Activated naive CD8-positive, alpha-beta T cell treated with anti-CD3 and anti-CD28 coated beads, Interleukin-2, amount 10 ng/mL, durations not matched to agents 7 days and 5 days (primary cell): ENCODE measurements at regions of chr5 and their contacts with region 1.

Region 1: DNA sequence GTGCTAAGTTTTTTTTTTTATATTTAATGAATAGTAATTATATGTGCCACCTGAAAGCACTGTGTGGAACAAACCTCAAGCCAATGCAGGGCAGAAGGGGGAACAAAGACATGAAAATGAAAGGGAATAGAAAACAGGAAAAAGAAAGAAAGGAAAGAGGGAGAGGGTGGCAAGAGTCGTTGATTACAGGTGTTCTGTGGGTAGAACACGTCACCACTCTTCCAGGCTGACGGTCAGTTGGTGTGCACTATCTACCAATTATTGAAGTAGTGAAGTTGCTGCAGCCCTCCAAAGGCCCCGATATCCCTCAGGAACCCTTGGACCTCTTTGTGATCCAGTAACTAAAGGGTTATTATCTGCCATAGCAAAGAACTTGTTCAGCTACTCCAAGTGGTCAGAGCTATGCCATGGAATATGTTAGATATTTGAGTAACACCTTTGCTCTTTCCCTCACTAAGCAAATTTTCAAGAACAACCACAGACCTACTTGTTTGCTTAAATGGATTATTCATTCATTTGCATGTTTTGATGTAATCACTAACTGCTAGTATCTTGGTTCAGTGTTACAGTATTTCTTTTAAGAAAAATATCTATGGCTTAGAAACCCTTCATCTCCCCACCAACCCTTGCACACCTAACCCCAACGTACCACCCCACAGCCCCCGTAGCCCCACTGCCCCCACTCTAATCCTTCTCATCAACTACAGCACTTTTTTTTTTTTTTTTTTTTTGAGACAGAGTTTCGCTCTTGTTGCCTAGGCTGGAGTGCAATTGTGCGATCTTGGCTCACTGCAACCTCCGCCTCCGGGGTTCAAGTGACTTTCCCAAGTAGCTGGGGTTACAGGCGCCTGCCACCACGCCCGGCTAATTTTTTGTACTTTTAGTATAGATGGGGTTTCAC is 31.3 kb downstream of the FYB1 start:
- DNase-seq: no peak
- ATAC-seq: peak; percentile 12
- H3K4me3 Mint-ChIP-seq: peak overlapping the region; percentile 85
- H3K27ac Mint-ChIP-seq: peak overlapping the region; percentile 90
- H3K4me1 Mint-ChIP-seq: peaks cover 82% of the 10 kb centered on the region
- H3K27me3 Mint-ChIP-seq: no peaks in the 10 kb centered on the region

Region 2: GRCh38 chr5:39164529-39165402 is 23.3 kb before region 1 on chr5:
- POLR2A ChIA-PET with region 1: interaction called, 16 read pairs
- DNase-seq: no peak
- ATAC-seq: peak; percentile 84
- H3K4me3 Mint-ChIP-seq: peak overlapping the region; percentile 74
- H3K27ac Mint-ChIP-seq: peak overlapping the region; percentile 78
- H3K4me1 Mint-ChIP-seq: peaks cover 63% of the 10 kb centered on the region
- H3K27me3 Mint-ChIP-seq: no peaks in the 10 kb centered on the region